ENCODE measurements at regions of chr15 and their contacts with region 1.

Region 1: GRCh38 chr15:53899366-53899765 is 78.9 kb upstream of the UNC13C start:
- DNase-seq: no peak
- ATAC-seq: no peak
- H3K4me3 Mint-ChIP-seq: no peak overlapping the region
- H3K27ac Mint-ChIP-seq: no peak overlapping the region
- H3K4me1 Mint-ChIP-seq: no peaks in the 10 kb centered on the region
- H3K27me3 Mint-ChIP-seq: peaks cover 3% of the 10 kb centered on the region

Region 2: GRCh38 chr15:53833134-53833624 is 66.2 kb before region 1 on chr15:
- CTCF ChIA-PET with region 1: no interaction called
- POLR2A ChIA-PET with region 1: no interaction called
- intact Hi-C with region 1: loop called in 1 of 2 experiments (anchors 10 kb)
- DNase-seq: no peak
- ATAC-seq: no peak
- H3K4me3 Mint-ChIP-seq: no peak overlapping the region
- H3K27ac Mint-ChIP-seq: no peak overlapping the region
- H3K4me1 Mint-ChIP-seq: no peaks in the 10 kb centered on the region
- H3K27me3 Mint-ChIP-seq: peaks cover 5% of the 10 kb centered on the region

Region 3: GRCh38 chr15:54045397-54045796 is 146.0 kb after region 1 on chr15:
- CTCF ChIA-PET with region 1: no interaction called
- POLR2A ChIA-PET with region 1: no interaction called
- intact Hi-C with region 1: no loop called
- DNase-seq: no peak
- ATAC-seq: no peak
- H3K4me3 Mint-ChIP-seq: no peak overlapping the region
- H3K27ac Mint-ChIP-seq: no peak overlapping the region
- H3K4me1 Mint-ChIP-seq: no peaks in the 10 kb centered on the region
- H3K27me3 Mint-ChIP-seq: no peaks in the 10 kb centered on the region

Measured in activated CD4-positive, alpha-beta T cell treated with anti-CD3 and anti-CD28 coated beads for 36 hours (primary cell).